ENCODE measurements at regions of chr2 and their contacts with region 1.

Region 1: DNA sequence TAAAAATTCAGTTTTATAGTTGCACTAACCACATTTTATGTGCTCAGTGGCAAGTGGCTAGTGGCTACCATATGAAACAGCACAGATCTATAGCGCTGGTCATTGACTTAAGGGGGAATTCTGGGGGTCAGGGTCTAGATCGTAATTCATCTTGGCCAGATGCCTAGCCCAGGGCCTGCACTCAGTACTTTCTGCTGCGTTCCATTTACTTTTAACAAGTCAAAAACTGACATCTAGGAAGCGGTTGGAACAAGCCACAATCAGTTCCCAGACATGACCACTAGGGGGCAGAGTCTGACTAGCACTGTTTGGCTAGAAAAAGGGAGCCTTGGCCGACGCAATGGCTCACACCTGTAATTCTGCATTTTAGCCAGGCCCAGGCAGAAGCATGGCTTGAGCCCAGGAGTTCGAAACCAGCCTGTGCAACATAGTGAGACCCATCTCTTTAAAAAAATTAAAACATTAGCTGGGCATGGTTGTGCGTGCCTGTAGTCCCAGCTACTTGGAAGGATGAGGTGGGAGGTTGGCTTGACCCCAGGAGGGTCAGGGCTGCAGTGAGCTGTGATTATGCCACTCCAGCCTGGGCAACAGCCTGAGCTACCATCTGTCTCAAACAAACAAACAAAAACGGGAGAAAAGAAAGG is 9.0 kb upstream of the TMBIM1 start:
- DNase-seq: peak; percentile 73 to 81
- H3K4me3 ChIP-seq: no peak overlapping the region
- H3K27ac ChIP-seq: no peak overlapping the region
- H3K4me1 ChIP-seq: peaks cover 34% of the 10 kb centered on the region
- H3K27me3 ChIP-seq: no peaks in the 10 kb centered on the region
- CTCF ChIP-seq: peak; percentile 97

Region 2: GRCh38 chr2:217434181-217434975 is 866.9 kb before region 1 on chr2:
- CTCF ChIA-PET with region 1: no interaction called
- POLR2A ChIA-PET with region 1: no interaction called
- intact Hi-C with region 1: no loop called
- DNase-seq: peak; percentile 52 to 73
- H3K4me3 ChIP-seq: no peak overlapping the region
- H3K27ac ChIP-seq: no peak overlapping the region
- H3K4me1 ChIP-seq: no peaks in the 10 kb centered on the region
- H3K27me3 ChIP-seq: no peaks in the 10 kb centered on the region
- CTCF ChIP-seq: no peak

Region 3: GRCh38 chr2:218186355-218186766 is 114.9 kb before region 1 on chr2:
- CTCF ChIA-PET with region 1: no interaction called
- POLR2A ChIA-PET with region 1: interaction called, 3 read pairs
- intact Hi-C with region 1: loop called (anchors 1 kb)
- DNase-seq: peak; percentile 56 to 72
- H3K4me3 ChIP-seq: no peak overlapping the region
- H3K27ac ChIP-seq: no peak overlapping the region
- H3K4me1 ChIP-seq: no peaks in the 10 kb centered on the region; the same call in 1 of the 2 replicates
- H3K27me3 ChIP-seq: 0 out of 2 replicates have a peak, but pooled peaks cover 6% of the 10 kb centered on the region
- CTCF ChIP-seq: peak; percentile 87

Region 4: GRCh38 chr2:218202266-218202665 is 99.0 kb before region 1 on chr2:
- CTCF ChIA-PET with region 1: no interaction called
- POLR2A ChIA-PET with region 1: no interaction called
- intact Hi-C with region 1: no loop called
- DNase-seq: no peak
- H3K4me3 ChIP-seq: no peak overlapping the region
- H3K27ac ChIP-seq: no peak overlapping the region
- H3K4me1 ChIP-seq: no peaks in the 10 kb centered on the region
- H3K27me3 ChIP-seq: peaks cover 5% of the 10 kb centered on the region; the same call in 1 of the 2 replicates
- CTCF ChIP-seq: no peak

Region 5: DNA sequence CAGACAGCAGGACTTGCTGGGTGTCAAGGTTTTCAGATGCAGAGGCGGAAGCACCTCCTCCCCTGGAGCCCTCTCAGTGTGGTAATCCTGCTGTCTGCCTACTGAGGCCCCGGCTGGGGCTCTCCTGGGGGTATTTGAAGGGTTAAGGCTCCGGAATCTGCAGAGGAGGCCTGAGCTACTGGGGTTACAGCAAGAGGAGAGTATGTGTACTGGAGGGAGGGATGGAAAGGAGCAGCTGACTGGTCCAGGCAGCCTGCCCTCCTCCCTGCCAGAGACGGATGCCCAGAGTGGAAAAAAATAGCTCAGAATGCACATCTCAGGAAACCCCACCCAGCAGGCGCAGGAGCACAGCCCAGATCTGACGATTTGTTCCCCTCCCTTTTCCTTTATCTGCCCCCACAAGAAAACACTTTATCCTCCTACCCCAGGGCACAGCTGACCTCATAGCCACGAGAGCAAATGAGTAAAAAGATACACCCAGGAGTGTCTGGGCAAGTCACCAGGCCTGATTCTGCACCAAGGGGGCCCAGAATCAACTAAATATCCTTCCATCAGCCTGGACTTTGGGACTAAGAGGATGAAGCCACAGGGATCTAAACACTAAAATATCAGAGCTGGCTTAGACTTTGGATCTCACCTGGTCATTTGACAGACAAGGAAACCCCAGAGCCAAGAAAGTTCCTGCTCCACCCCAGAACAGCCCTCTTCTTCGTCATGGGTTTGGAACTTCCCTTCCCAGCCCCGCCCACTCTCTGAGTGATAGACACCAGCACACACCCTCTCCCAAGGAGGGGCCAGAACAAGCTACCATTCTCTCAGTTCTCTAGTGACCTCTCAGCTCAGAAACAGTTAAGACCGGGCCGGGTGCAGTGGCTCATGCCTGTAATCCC is 14.5 kb before region 1 on chr2:
- CTCF ChIA-PET with region 1: interaction called, 11 read pairs
- POLR2A ChIA-PET with region 1: interaction called, 15 read pairs
- intact Hi-C with region 1: loop called (anchors 1 kb)
- DNase-seq: peak; percentile 89 to 93
- H3K4me3 ChIP-seq: peak overlapping the region; percentile 56
- H3K27ac ChIP-seq: peak overlapping the region; percentile 98
- H3K4me1 ChIP-seq: peaks cover 91% of the 10 kb centered on the region
- H3K27me3 ChIP-seq: no peaks in the 10 kb centered on the region
- CTCF ChIP-seq: no peak

Region 6: DNA sequence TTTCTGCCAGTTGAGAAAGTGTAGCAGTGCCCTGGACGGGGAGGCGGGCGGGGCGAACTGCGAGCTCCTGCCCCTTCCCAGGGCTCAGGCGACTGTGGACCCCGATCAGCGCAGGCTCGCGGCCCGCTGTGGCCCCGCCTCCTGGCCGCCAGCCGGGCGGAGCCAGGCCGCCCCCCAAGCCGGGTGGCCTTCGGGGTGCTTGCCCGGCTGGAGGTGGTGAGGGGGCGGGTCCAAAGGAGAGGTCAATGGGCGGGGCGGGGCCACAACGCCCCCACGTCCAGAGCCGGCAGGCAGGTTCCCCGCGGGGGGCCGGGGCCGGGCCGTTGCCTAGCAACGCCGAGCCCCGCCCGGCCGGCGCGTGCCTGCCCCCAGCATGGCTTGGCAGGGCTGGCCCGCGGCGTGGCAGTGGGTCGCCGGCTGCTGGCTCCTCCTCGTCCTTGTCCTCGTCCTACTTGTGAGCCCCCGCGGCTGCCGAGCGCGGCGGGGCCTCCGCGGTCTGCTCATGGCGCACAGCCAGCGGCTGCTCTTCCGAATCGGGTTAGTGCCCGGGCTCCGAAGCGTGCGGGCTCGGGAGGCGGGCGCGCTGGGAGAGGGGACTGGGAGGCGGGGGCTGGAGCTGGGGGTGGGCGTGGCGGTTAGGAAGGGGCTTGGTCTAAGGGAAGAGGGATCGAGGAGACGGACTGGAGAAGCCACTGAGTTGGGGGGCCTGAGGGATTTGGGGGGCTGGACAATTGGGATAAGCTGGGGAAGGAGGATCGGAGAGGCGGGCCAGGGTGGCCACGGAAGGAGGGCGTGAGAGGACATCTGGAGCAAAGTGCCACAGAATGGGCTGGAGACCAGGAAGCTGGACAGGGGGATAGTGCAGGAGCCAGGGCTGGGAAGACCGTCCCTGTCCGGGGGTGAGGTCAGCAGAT is 21.9 kb after region 1 on chr2:
- CTCF ChIA-PET with region 1: interaction called, 6 read pairs
- POLR2A ChIA-PET with region 1: interaction called, 10 read pairs
- intact Hi-C with region 1: loop called (anchors 1 kb)
- DNase-seq: peak; percentile 66 to 94
- H3K4me3 ChIP-seq: peak overlapping the region; percentile 66
- H3K27ac ChIP-seq: peak overlapping the region; percentile 88
- H3K4me1 ChIP-seq: peaks cover 46% of the 10 kb centered on the region
- H3K27me3 ChIP-seq: no peaks in the 10 kb centered on the region
- CTCF ChIP-seq: no peak

Region 7: DNA sequence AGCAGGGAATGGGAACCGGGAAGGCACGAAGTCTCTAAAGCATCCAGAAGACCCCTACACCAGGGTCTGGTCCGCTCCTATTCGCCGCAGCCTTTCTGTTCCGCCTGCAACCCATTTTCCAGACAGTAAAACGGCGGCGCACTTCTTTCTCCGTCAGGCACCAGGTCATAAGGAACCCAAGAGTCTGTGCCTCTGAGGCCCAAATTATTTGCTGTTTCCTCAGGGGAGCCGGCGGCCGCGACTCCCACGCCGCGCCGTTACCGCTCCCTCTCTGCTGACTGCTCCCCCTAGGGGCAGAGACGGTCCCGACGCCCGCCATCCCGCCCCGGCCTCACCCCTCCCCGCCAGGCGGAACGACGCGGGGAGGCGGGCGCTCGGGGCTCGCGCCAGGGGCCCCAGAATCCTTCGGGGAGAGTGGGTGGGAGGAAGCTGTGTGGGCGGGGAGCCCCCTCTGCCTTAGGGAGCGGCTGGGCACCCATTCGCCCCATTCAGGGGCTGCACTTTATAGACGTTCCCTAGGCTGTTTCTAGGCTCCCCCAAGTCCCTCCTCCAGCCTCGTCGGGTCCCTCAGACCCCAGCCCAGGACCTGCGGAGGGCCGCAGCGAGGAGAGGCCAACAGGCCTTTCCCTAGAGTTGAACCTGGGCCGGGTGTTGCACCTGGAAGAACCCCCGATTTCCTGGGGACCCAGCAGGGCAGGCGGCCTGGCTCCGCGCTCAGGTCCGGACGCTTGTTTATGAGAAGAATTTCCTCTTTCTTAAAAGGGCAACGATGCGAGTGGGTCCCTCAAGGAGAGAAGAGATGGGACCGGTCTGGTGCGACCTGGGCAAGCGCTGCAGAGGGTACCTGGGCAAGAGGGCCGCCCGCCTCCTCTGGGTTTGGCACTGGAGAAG is 94.7 kb after region 1 on chr2:
- CTCF ChIA-PET with region 1: interaction called, 9 read pairs
- POLR2A ChIA-PET with region 1: interaction called, 4 read pairs
- intact Hi-C with region 1: loop called (anchors 1 kb)
- DNase-seq: peak; percentile 83 to 95
- H3K4me3 ChIP-seq: peak overlapping the region; percentile 89
- H3K27ac ChIP-seq: peak overlapping the region; percentile 79
- H3K4me1 ChIP-seq: peaks cover 20% of the 10 kb centered on the region
- H3K27me3 ChIP-seq: no peaks in the 10 kb centered on the region
- CTCF ChIP-seq: peak; percentile 86